Sciatic nerve (tissue), 2 donors: ENCODE measurements at regions of chr13 and their contacts with region 1.

Region 1: GRCh38 chr13:78712831-78713230 is 53.9 kb upstream of the OBI1 start:
- DNase-seq: no peak
- ATAC-seq: no peak

Region 2: DNA sequence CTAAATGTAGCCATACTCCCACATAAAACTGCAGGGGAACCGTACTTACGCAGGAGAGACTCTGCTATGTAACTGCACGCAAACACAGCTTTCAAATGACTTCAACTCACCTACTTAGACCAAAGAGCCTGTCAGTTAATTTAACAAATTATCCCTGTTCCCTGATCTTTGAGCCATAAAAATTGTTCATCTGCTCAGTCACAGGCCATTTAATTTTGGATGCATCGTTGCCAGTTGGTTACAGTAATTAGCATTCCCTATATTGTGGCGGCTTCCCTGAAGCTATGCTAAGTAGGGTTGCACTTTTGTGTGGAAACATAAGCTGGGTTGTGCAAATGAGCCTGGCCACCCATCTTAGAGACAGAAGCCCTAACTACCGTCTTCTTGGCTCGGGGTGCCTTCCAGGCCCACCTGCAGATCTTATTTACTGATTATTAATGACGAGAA is 32.7 kb before region 1 on chr13:
- intact Hi-C with region 1: no loop called
- DNase-seq: no peak
- ATAC-seq: no peak

Region 3: GRCh38 chr13:79108914-79109643 is 396.2 kb after region 1 on chr13:
- intact Hi-C with region 1: loop called (anchors 10 kb)
- DNase-seq: no peak
- ATAC-seq: no peak

Region 4: GRCh38 chr13:79287939-79288795 is 575.3 kb after region 1 on chr13:
- intact Hi-C with region 1: no loop called
- DNase-seq: no peak
- ATAC-seq: no peak

Region 5: DNA sequence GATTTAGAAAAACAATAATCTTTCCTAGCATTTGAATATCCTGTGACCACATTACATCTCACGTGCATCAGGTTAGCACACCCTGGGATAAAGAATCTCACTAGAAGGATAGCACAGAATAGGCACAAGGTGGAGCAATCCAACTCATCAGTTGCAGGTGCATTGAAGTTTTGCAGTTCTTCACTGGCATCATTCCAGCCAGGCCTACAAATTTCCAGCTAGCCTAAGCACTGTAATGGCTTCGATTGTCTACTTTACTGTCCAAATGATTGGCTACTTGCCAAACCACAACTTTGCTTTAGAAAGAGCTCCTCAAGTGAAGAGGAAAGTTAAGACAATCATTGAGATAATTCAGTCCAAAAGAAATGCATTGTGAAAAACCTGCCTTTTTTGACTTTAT is 1538.6 kb after region 1 on chr13:
- intact Hi-C with region 1: no loop called
- DNase-seq: no peak
- ATAC-seq: no peak